ENCODE measurements at regions of chr10 and their contacts with region 1.

Region 1: DNA sequence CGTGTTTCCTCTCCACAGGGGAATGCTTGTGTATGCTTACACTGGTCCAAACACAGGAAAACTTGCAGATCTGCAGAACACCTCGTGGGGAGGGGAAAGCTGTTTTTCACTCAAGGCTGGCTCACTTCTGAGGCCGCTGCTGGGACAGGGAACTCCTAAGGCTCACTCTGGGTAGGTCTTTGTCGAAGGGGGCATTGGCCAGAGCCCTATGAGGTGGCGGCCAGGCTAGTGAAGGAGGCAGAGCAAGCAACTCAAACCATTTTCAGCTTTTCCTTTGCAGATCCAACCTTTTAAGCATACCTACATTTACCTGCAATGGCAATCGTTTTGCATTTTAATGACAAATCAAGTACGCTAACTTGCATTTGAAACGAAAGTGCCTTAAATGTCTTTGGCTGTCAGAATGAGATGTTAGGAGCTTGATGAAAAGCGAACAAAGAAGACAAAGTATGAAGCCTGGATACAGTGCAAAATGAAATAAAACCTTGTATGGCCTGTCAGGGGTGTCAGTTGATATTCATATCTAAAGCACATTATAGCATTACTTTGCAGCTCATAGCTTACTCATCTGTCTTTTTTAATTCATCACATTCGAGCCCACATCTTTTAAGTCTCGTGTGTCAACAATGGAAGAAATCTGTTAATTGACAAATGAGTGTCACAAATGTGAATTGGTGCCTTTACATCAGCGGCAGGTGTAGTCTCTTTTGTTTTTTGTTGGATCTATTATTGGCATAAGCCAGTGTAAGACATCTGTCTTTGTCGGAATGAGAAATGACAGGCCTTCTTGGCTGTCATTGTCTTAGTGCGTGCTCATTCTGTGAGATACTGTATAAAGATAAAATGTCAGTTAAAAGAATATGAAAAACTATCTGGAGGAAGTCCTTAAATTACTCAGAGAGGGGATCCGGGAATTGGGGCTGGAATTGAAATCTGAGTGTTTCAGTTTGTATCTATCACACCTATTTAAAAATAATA is 30.5 kb downstream of the LRMDA start:
- DNase-seq: no peak
- ATAC-seq: no peak
- H3K4me3 Mint-ChIP-seq: no peak overlapping the region
- H3K27ac Mint-ChIP-seq: no peak overlapping the region
- H3K4me1 Mint-ChIP-seq: no peaks in the 10 kb centered on the region
- H3K27me3 Mint-ChIP-seq: peaks cover 4% of the 10 kb centered on the region
- CTCF ChIP-seq: no peak

Region 2: DNA sequence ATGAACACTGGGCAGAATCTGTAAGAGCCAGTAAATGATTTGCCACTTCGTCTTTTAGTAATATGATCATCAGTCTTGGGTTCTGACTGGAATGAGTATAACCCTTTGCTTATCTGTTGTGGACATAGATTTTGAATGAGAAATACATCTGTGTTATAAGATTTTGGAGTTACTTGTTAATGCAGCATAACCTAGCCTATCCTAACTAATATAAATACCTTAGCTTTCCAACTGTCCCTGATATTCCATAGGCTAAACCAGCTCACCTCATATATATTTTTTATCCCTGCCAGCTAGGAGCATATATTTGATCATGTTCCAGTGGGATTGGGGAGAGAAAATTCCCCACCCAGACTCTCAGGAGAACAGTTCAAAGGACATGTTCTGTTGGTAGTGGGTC is 15.5 kb before region 1 on chr10:
- CTCF ChIA-PET with region 1: no interaction called
- POLR2A ChIA-PET with region 1: no interaction called
- intact Hi-C with region 1: loop called (anchors 1 kb)
- DNase-seq: no peak
- ATAC-seq: no peak
- H3K4me3 Mint-ChIP-seq: no peak overlapping the region
- H3K27ac Mint-ChIP-seq: no peak overlapping the region
- H3K4me1 Mint-ChIP-seq: no peaks in the 10 kb centered on the region
- H3K27me3 Mint-ChIP-seq: peaks cover 6% of the 10 kb centered on the region
- CTCF ChIP-seq: no peak

Region 3: GRCh38 chr10:76150139-76150875 is 688.3 kb after region 1 on chr10:
- CTCF ChIA-PET with region 1: no interaction called
- POLR2A ChIA-PET with region 1: no interaction called
- intact Hi-C with region 1: no loop called
- DNase-seq: no peak
- ATAC-seq: no peak
- H3K4me3 Mint-ChIP-seq: no peak overlapping the region
- H3K27ac Mint-ChIP-seq: no peak overlapping the region
- H3K4me1 Mint-ChIP-seq: no peaks in the 10 kb centered on the region
- H3K27me3 Mint-ChIP-seq: no peaks in the 10 kb centered on the region
- CTCF ChIP-seq: no peak

Measured in activated B cell treated with CpG ODN at 0.5 μM for 24 hours (primary cell).